ENCODE measurements at regions of chr15 and their contacts with region 1.

Region 1: DNA sequence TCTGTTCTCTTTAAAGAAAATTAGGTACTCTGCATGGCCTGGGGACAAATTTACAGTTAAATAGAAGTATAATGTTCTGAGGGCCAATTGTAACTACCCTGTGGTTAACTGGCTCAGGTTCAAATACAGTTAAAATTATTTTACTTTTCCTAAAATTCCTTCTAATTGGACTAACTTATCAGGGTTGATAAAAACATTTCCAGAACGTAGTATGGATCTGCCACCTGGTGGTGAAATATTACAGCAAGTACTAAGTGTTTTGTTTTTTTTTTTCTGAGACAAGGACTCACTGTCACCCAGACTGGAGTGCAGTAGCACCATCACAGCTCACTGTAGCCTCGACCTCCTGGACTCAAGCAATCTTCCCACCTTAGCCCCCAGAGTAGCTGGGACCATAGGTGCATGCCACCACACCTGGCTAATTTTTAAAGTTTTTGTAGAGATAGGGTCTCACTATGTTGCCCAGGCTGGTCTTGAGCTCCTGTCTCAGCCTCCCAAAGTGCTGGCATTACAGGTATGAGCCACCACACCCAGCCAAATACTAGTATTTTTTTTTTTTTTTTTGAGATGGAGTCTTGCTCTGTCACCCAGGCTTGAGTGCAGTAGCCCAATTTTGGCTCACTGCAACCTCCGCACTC is 29.2 kb downstream of the NEO1 start:
- DNase-seq: no peak
- H3K4me3 Mint-ChIP-seq: no peak overlapping the region
- H3K27ac Mint-ChIP-seq: no peak overlapping the region
- H3K4me1 Mint-ChIP-seq: peaks cover 11% of the 10 kb centered on the region
- H3K27me3 Mint-ChIP-seq: peaks cover 4% of the 10 kb centered on the region

Region 2: GRCh38 chr15:72722071-72722696 is 359.3 kb before region 1 on chr15:
- intact Hi-C with region 1: loop called (anchors 1 kb)
- DNase-seq: peak; percentile 54
- H3K4me3 Mint-ChIP-seq: no peak overlapping the region
- H3K27ac Mint-ChIP-seq: no peak overlapping the region
- H3K4me1 Mint-ChIP-seq: no peaks in the 10 kb centered on the region
- H3K27me3 Mint-ChIP-seq: no peaks in the 10 kb centered on the region

Region 3: DNA sequence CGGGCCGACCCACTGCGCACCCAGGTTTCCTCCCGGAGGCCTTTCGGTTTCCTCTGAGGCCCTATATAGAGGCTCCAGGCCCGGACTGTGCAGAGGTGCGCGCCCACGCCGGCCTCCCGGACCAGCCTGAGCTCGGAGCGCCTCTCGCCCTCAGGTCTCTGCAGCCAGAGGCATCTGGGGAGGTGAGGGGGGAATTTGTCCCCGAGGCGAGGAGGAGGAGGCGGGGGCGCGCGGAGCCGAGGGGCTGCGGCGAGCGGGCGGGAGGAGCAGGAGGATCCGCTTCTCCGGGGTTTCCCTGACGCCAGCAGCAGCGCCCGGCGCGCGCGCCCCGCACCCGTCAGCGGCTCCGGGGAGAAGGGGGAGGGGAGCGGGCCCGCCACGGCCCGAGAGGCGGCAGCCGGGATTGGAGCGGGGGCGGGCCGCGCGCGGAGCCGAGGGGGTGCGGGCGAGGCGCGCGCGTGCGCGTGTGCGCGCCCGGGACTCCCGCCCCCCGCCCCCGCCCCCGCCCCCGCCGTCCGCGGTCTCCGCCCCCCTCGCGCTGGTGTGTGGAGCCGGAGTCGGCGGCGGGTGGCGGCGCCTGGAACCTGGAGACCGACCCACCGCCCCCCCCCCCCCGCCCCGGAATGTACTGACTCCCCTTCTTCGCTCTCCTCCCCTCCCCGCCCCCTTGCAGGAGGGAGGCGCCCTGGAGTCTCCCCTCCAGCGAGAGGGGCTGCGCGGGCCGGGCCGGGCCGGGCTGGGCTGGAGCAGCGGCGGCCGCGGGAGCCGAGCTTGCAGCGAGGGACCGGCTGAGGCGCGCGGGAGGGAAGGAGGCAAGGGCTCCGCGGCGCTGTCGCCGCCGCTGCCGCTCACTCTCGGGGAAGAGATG is 29.4 kb before region 1 on chr15 and contains the start of gene NEO1:
- intact Hi-C with region 1: loop called (anchors 2 kb)
- DNase-seq: peak; percentile 71
- H3K4me3 Mint-ChIP-seq: peak within 1 kb of the TSS; percentile 78
- H3K27ac Mint-ChIP-seq: peak within 1 kb of the TSS; percentile 51
- H3K4me1 Mint-ChIP-seq: peaks cover 11% of the 10 kb centered on the region
- H3K27me3 Mint-ChIP-seq: peaks cover 33% of the 10 kb centered on the region
- total RNA-seq, gene NEO1: 9.8 and 12.5 TPM in 2 replicates

Region 4: DNA sequence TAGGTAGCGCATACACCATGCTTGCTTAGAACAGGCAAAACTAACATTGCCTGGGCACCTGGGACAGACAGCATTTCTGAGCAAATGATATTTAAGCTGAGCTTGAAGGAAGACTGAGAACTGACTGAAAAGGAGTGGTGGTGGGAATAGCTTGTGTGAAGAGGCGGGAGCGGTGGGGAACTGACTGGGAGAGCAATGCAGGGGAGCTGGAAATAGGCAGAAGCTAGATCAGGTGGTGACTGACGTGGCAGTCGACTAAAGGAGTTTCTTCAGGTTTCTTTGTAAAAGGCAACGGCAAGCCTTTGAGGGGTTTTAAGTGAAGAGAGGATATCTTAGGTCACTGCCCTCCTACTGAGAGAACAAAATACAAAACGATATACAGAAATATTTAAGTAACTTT is 32.6 kb after region 1 on chr15:
- intact Hi-C with region 1: no loop called
- DNase-seq: no peak
- H3K4me3 Mint-ChIP-seq: no peak overlapping the region
- H3K27ac Mint-ChIP-seq: no peak overlapping the region
- H3K4me1 Mint-ChIP-seq: no peaks in the 10 kb centered on the region
- H3K27me3 Mint-ChIP-seq: peaks cover 16% of the 10 kb centered on the region

Measured in activated T-helper 2 cell treated with anti-CD3 and anti-CD28 coated beads, Interferon-gamma antibody, Interleukin-2, Interleukin-4, amounts not matched to agents 10 μg/mL and 5 μg/mL and 100 μg/mL, durations not matched to agents 14 hours and 24 hours and 36 hours (primary cell).